Activated naive CD4-positive, alpha-beta T cell treated with anti-CD3 and anti-CD28 coated beads for 36 hours (primary cell): ENCODE measurements at regions of chr9 and their contacts with region 1.

Region 1: DNA sequence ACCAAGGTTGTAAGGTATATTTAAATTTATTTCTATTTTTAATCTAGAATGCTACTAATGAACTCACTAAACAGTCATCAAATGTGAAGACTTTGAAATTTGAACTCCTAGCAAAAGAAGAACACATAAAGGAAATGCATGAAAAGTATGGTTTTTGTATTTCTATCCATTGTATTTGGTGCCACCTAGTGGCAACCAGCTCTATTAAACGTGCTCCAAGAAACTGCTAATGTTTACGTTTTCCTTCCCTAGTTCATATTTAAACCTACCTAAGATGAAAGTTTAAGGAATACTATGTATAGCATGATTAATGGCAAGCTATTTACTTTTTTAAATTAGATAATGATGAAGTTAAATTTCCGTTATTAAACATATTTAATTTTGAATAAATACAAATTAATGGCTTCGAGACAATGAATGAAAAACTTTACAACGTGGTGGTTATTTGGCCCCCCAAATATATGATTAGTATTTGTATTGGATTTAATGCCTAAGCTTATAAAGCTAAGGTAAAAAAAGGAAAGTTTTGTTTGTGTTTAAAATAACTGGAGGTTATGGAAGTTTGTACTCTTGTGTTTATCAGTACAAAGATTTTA is 115.9 kb upstream of the SH3GL2 start:
- DNase-seq: peak; percentile 32
- H3K4me3 Mint-ChIP-seq: no peak overlapping the region
- H3K27ac Mint-ChIP-seq: no peak overlapping the region
- H3K4me1 Mint-ChIP-seq: no peaks in the 10 kb centered on the region
- H3K27me3 Mint-ChIP-seq: no peaks in the 10 kb centered on the region

Region 2: DNA sequence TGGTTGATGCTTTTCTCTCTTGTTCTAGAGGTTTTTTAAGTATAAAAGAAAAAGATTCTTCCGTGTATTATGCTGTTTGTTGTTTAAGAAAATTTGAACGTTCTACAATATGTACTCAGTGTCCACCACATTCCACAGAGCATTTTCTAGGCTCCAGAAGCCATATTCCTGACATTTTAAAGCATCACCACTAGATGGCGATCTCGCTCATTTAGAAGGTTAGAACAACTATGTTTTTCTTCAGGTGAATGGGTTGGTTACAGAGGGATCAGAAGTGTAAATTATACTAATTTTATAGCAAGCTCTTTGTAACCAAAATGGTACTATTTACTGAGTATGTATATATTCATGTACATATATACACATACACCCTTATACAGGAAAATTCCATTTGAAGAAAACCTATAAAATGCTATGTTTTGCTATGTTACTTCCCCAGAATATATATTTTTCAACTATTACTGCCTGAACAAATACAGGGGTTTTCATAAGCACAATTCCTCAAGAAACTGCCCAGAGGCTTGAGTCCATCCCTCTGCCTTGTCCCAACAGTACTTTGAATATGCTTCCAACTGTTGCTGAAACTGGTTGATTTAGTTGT is 1625.8 kb before region 1 on chr9:
- CTCF ChIA-PET with region 1: no interaction called
- intact Hi-C with region 1: loop called (anchors 10 kb)
- DNase-seq: peak; percentile 29
- H3K4me3 Mint-ChIP-seq: no peak overlapping the region
- H3K27ac Mint-ChIP-seq: no peak overlapping the region
- H3K4me1 Mint-ChIP-seq: no peaks in the 10 kb centered on the region
- H3K27me3 Mint-ChIP-seq: no peaks in the 10 kb centered on the region

Region 3: DNA sequence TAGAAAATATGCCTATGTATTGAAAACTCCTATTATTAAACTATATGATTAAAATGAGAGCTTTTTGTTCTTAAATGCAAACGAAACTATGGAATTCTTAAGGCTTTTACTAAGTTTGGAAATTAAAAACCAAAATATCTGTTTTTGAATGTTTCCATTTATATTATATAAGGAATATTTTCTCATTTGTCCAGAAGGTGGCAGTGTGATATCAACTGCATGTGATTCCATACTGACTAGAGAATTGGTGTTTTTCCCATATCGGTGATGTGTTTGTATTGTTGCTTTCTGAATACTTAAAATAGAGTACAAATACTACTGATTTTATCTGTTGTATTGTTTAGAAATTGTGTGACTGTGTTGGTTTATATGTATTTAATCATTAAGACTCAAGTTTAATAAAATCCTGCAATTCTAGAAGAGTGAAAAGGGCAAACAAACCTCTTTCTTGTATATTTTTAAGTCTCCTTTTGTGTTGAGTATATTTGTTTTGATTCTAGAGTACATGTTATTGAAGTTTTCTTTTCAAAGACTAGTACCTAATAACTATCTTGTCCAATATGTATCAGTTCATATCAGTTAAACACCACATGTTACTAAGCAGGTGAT is 1589.3 kb before region 1 on chr9:
- CTCF ChIA-PET with region 1: no interaction called
- intact Hi-C with region 1: loop called (anchors 2 kb)
- DNase-seq: no peak
- H3K4me3 Mint-ChIP-seq: no peak overlapping the region
- H3K27ac Mint-ChIP-seq: no peak overlapping the region
- H3K4me1 Mint-ChIP-seq: no peaks in the 10 kb centered on the region
- H3K27me3 Mint-ChIP-seq: no peaks in the 10 kb centered on the region

Region 4: GRCh38 chr9:16191691-16192402 is 1271.1 kb before region 1 on chr9:
- CTCF ChIA-PET with region 1: no interaction called
- intact Hi-C with region 1: loop called (anchors 10 kb)
- DNase-seq: peak; percentile 55
- H3K4me3 Mint-ChIP-seq: no peak overlapping the region
- H3K27ac Mint-ChIP-seq: no peak overlapping the region
- H3K4me1 Mint-ChIP-seq: no peaks in the 10 kb centered on the region
- H3K27me3 Mint-ChIP-seq: no peaks in the 10 kb centered on the region

Region 5: GRCh38 chr9:17063535-17064135 is 399.3 kb before region 1 on chr9:
- CTCF ChIA-PET with region 1: interaction called, 3 read pairs
- intact Hi-C with region 1: loop called (anchors 1 kb)
- DNase-seq: peak; percentile 6
- H3K4me3 Mint-ChIP-seq: no peak overlapping the region
- H3K27ac Mint-ChIP-seq: no peak overlapping the region
- H3K4me1 Mint-ChIP-seq: no peaks in the 10 kb centered on the region
- H3K27me3 Mint-ChIP-seq: peaks cover 2% of the 10 kb centered on the region

Region 6: DNA sequence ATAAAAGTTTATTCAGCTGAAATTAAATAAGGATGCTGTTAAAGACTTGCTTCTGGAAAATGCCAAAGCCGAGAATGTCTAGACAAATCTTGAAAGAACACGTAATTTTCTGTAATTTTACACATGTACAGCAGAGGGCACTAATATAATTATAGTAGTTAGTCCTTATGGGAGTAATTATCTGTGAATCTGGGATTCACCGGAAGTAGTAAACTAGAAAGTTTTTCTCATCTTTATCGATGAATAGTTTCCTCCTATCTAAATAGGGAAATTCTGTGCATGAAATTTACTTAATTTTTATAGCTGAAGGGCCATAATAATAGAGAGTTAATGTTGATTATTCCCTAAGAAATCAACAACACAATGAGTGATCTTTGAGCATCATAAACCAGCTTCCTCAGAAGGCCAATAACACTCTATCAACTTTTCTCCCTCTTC is 346.5 kb before region 1 on chr9:
- CTCF ChIA-PET with region 1: interaction called, 17 read pairs
- intact Hi-C with region 1: loop called (anchors 1 kb)
- DNase-seq: no peak
- H3K4me3 Mint-ChIP-seq: no peak overlapping the region
- H3K27ac Mint-ChIP-seq: no peak overlapping the region
- H3K4me1 Mint-ChIP-seq: no peaks in the 10 kb centered on the region
- H3K27me3 Mint-ChIP-seq: no peaks in the 10 kb centered on the region

Region 7: DNA sequence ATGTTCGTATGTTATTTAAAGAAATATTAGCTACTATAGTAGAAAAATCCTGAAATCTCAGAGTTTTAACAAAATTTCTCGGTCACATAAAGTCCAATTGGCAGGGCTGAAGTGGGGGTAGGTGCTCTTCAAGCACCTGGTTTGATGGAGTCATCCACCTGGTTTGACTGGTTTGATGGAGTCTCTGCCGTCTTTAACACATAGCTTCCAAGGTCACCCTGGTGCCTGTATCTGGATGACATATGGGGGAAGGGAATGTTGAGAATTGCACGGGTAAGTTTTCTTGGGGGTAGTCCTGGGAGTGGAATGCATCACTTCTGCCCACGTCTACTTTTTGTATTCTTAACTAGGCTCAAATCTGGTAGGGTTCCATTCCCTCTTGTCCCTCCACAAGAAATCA is 467.1 kb after region 1 on chr9:
- CTCF ChIA-PET with region 1: no interaction called
- intact Hi-C with region 1: no loop called
- DNase-seq: no peak
- H3K4me3 Mint-ChIP-seq: no peak overlapping the region
- H3K27ac Mint-ChIP-seq: no peak overlapping the region
- H3K4me1 Mint-ChIP-seq: no peaks in the 10 kb centered on the region
- H3K27me3 Mint-ChIP-seq: no peaks in the 10 kb centered on the region